AG04449 (cell line): ENCODE measurements at regions of chr1 and their contacts with region 1.

Region 1: GRCh38 chr1:78004719-78005447 is at the start of gene DNAJB4:
- DNase-seq: peak; percentile 92
- H3K4me3 ChIP-seq: peak within 1 kb of the TSS; percentile 61
- CTCF ChIP-seq: no peak

Region 2: DNA sequence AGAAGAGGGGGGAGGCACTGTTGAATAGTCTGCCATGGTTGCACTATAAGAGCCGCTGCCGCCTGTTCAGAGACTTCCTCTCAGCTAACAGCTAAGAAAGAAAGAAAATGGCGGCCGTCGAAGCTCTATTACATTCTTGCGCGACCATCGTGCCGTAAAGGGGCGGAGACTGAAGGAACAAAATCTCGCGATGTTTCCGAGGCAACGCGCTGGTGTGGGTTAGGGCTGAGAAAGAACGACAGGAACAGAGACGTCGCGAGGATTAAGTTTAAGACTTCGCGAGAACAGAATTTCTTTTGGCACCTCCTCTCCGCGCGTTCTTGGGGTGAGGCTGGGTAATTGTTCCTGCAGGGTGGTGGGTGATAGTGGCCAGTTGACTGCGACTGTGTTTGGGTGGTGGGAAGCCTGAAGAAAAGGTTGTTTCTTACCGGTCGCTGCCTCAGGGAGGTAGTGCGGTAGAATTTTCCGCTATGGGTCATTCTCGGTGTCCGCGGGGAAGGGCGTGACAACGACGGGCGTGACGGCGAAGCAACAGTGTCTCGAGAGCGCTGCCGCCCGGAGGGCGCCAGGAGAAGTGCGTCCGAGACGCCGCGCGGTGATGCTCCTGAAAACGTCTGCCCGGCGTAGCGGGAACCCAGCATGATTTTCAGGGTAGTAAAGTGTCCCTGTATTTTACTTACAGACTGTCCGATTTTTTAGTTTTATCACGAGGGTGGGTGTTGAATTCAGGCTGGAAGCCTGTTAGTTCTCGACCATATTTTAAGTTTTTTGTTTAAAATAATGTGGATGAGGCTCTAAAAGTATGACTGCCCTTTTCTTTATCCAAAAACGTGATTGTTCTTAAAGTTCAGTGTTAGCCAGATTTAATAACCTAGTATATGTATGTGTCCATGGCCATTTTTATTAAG is 25.7 kb before region 1 on chr1 and contains the start of gene FUBP1:
- CTCF ChIA-PET with region 1: interaction called, 7 read pairs
- POLR2A ChIA-PET with region 1: interaction called, 55 read pairs
- DNase-seq: peak; percentile 96
- H3K4me3 ChIP-seq: peak within 1 kb of the TSS; percentile 95
- CTCF ChIP-seq: peak; percentile 78

Region 3: DNA sequence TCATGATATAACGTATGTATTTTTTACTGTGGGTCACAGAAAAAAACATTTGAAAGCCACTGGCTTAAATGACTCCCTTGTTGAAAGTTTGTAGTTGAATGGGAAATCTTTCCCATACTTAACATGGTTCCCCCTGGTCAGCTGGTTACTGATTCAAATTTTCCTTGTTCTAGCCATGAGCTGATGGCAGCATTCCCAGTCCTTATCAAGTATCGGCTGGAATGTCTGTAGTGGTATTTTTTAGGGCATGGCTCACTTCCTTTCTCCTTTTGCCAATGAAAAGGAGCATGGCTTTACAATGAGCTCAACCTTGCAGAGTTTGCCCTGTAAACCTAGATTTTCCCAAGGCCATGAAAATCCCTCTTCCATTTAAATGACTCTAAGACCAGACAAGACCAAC is 96.6 kb after region 1 on chr1:
- CTCF ChIA-PET with region 1: interaction called, 3 read pairs
- POLR2A ChIA-PET with region 1: interaction called, 60 read pairs
- DNase-seq: peak; percentile 89
- H3K4me3 ChIP-seq: no peak overlapping the region
- CTCF ChIP-seq: no peak

Region 4: DNA sequence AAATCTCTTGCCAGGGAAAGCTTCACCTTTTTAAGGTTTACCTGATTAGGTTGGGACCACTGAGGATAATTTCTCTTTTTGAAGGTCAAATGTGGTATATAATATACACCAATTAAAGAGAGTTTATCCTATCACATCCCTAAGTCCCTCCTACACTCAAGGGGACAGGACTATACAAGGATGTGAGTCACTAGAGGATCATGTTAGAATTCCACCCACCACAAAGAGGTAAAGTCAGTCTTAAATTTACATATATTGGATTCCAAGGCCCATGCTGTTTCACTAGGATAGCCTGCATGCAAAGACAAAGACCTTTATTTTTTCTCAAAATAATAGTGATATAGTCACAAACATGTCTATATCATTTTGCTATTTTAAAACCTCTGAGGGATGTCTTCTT is 205.3 kb after region 1 on chr1:
- CTCF ChIA-PET with region 1: no interaction called
- POLR2A ChIA-PET with region 1: no interaction called
- DNase-seq: no peak
- H3K4me3 ChIP-seq: no peak overlapping the region
- CTCF ChIP-seq: no peak